Heart left ventricle (tissue), 16 donors: ENCODE measurements at regions of chr6 and their contacts with region 1.

Region 1: DNA sequence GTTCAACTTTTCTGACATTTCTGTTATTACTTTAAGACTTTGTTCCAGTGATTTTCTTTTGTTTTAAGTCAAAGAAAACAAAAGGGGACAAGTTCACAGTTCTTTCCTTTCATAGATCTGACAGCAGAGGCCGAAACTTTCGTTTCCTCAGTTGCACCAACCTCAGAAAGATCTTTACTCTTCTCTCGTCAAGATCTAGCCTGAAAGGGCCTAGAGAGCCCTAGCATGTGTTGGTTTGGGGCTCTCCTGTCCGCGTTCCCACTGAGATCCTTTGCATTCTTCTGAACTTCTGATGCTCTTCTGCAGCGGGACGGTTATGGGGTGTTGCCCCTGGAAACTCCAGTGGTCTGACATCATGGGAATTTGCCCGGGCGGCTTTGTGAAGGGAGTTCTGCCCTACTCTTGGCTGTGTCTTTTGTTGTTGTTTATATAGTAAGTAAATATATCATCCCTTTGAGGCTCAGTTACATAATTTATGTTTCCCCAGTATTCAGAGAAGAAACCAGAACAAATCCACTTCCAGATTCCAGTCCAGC is 129.1 kb downstream of the SASH1 start:
- DNase-seq: no peak
- ATAC-seq: peak in 3 of 4 donors; percentile 46 to 62 (median 49)
- H3K4me3 ChIP-seq: peak overlapping the region in 1 of 12 donors; percentile 14
- H3K27ac ChIP-seq: peak overlapping the region in 10 of 12 donors; percentile 34 to 69 (median 54)
- H3K4me1 ChIP-seq: peaks cover 0 to 38% (median 10%) of the 10 kb centered on the region in 12 donors
- H3K27me3 ChIP-seq: no peaks in the 10 kb centered on the region
- CTCF ChIP-seq: no peak
- POLR2A ChIP-seq: no peak

Region 2: DNA sequence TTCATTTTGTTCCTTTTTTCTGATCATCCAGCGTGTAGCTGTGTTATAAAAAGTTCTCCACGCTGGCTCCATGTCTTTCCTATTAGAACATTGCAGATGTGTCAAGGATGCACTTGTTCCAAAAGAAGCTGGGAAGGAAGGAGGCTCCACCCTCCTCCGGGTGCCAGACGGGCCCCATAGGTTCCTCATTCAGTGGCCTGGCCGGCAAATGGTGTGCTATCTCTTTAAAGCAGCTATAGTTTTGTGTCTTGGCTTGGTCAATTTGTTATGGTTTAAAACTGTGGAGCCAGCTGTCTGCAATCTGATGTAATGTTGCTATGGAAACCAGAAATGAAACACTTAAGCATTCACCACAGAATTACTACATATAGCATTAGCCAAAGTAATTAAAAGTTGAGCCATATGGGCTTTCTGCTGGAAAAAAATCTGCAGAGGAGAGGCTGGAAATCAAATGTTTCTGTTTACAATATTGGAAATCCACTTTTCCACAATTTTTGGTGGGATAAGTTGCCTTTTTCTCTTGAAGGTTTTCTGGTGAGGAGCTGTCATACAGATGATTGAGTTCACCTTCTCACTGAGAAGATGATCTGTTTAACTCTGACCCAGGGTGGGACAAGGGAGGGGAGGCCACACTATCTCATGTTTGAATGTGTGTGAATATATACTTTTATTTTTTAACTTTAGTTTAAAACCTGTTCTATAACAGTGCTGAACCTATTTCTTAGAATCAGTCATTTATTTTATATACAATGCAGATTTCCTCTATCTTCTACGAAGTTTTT is 38.3 kb after region 1 on chr6:
- intact Hi-C with region 1: loop called in 1 of 10 experiments (anchors 5 kb)
- DNase-seq: peak in 4 of 5 donors; percentile 49 to 74 (median 59)
- ATAC-seq: peak; percentile 48 to 69 (median 60)
- H3K4me3 ChIP-seq: peak overlapping the region; percentile 12 to 68 (median 48)
- H3K27ac ChIP-seq: peak overlapping the region; percentile 59 to 92 (median 81)
- H3K4me1 ChIP-seq: peaks cover 0 to 56% (median 18%) of the 10 kb centered on the region in 12 donors
- H3K27me3 ChIP-seq: no peaks in the 10 kb centered on the region
- CTCF ChIP-seq: no peak
- POLR2A ChIP-seq: peak; percentile 4 to 49

Region 3: GRCh38 chr6:148538261-148539190 is 66.8 kb after region 1 on chr6:
- intact Hi-C with region 1: loop called in 1 of 10 experiments (anchors 2 kb)
- DNase-seq: no peak
- ATAC-seq: peak in 3 of 4 donors; percentile 10 to 53 (median 26)
- H3K4me3 ChIP-seq: no peak overlapping the region
- H3K27ac ChIP-seq: peak overlapping the region in 10 of 12 donors; percentile 7 to 59 (median 36)
- H3K4me1 ChIP-seq: peaks cover 0 to 17% (median 5%) of the 10 kb centered on the region in 12 donors
- H3K27me3 ChIP-seq: no peaks in the 10 kb centered on the region
- CTCF ChIP-seq: no peak
- POLR2A ChIP-seq: no peak